Activated naive CD4-positive, alpha-beta T cell treated with anti-CD3 and anti-CD28 coated beads for 36 hours (primary cell): ENCODE measurements at regions of chr12 and their contacts with region 1.

Region 1: DNA sequence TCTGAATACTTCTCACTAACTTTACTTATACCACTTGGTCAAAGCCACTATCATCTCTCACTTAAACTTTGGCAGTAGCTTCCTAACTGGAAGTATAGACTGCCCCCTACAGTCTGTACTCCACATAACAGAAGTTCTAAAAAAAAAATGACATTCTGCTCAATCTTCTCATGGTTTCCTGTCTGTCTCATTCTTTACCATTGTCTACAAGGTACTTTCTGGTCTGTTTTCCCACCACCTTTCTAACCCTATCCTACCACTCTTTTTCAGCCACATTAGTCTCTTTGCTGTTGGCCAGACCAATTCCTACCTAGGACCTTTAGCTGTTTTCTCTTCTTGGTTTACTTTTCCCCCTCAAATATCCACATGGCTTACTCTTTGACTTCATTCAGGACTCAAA is 14.7 kb downstream of the CPSF6 start:
- DNase-seq: no peak
- H3K4me3 Mint-ChIP-seq: no peak overlapping the region
- H3K27ac Mint-ChIP-seq: peak overlapping the region; percentile 71
- H3K4me1 Mint-ChIP-seq: peaks cover 39% of the 10 kb centered on the region
- H3K27me3 Mint-ChIP-seq: no peaks in the 10 kb centered on the region

Region 2: DNA sequence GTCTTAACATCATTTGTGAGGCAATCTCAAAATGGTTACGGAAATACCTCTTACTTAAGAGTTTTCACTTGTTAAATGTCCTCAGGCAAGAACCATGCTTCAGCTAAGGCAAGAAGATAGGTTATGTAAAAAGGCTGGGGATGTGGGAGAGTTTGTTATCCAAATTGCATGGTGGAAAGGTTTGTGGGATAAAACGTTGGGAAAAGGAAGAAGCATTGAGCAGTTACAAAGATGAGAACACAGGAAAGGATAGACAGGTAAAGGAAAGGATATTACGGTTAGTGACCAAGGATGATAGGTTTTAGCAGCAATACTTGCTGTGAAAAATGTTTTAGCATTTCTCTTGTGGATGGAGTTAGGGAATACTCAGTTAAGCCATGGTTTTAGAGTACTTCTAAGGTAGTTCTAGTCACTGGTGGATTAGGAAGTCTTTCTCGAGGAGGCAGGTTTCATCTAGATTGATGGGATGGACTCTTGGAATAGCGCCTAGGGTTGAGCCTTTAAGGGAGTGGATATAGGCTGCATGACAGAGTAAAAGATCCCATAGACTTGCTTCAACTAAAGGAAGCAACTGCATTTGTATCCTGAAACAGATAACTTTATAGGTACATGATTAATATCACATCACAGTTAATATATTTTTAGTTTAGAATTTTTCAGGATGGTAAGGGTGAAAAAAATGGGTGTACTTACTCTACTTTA is 415.7 kb before region 1 on chr12:
- CTCF ChIA-PET with region 1: no interaction called
- intact Hi-C with region 1: no loop called
- DNase-seq: no peak
- H3K4me3 Mint-ChIP-seq: no peak overlapping the region
- H3K27ac Mint-ChIP-seq: peak overlapping the region; percentile 22
- H3K4me1 Mint-ChIP-seq: peaks cover 14% of the 10 kb centered on the region
- H3K27me3 Mint-ChIP-seq: no peaks in the 10 kb centered on the region

Region 3: DNA sequence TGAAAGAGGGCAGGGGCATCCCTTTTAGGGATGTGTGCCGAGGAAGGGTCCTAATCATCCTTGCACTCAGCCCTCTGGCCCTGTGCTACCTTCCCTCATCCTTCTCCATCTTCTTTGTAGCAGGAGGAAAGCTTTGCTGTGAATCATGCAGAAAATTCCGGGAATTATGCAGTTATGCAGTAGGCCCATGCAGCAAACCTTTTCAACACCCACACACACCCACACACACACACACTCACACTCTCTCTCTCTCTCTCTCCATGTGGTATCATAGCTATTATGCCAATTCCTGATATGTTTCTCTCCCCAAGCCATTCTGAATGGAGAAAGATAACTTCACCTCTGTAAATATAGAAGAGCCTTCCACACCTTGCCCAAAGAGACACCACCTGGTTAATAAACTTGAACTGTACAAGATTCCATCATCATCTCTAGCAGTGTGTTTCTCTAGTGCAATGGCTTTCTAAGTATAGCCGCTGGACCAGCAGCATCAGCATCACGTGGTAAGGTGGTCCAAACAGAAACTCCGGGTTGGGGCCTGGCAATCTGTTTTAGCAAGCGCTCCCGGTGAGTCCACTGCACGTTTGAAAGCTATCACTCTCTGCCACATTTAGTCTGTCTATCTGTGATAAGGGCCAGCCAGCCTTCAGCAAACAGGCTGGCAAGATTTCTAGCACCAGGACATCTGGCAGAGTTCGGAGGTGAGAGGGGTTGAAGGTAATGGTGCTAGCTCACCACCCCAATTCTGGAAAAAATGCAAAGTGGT is 388.5 kb before region 1 on chr12:
- CTCF ChIA-PET with region 1: no interaction called
- intact Hi-C with region 1: loop called (anchors 2 kb)
- DNase-seq: no peak
- H3K4me3 Mint-ChIP-seq: no peak overlapping the region
- H3K27ac Mint-ChIP-seq: no peak overlapping the region
- H3K4me1 Mint-ChIP-seq: peaks cover 6% of the 10 kb centered on the region
- H3K27me3 Mint-ChIP-seq: no peaks in the 10 kb centered on the region

Region 4: DNA sequence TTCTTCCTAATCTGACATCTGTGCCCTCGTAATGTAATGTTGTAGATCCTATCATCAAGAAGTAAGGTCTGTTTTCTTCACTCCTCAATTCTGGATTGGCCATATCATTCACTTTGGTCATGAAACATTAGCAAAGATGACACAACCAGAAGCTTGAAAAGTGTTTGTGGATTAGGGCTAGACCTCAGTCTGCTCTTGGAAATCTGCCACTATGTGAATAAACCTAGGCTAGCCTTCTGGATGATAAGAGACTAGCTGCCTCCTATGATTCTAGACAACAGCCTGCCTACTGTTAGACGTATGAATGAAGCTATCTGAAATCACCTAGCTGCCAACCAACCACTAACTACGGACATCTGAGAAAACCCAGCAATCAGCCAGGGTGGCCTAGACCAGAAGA is 55.4 kb after region 1 on chr12:
- CTCF ChIA-PET with region 1: no interaction called
- intact Hi-C with region 1: no loop called
- DNase-seq: no peak
- H3K4me3 Mint-ChIP-seq: no peak overlapping the region
- H3K27ac Mint-ChIP-seq: no peak overlapping the region
- H3K4me1 Mint-ChIP-seq: no peaks in the 10 kb centered on the region
- H3K27me3 Mint-ChIP-seq: no peaks in the 10 kb centered on the region

Region 5: DNA sequence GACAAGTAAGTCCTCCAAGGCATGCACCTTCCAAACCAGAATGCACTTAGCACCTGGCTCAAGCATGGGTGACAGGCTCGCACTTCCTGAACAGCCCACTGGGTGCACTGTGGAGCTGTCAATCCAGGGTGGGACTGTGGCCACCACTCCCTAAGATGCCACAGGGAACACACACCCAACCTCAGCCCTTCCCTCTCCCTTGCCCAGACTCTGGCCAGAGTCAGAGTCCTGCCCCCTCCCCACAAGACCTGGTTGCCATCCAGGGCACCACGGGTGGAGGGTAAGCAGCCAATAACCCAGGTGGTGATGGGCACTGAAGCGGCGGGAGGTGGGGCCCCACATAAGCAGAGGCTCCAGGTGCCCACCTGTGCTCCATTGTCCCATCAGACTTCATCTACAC is 731.6 kb after region 1 on chr12:
- CTCF ChIA-PET with region 1: no interaction called
- intact Hi-C with region 1: no loop called
- DNase-seq: peak; percentile 31
- H3K4me3 Mint-ChIP-seq: no peak overlapping the region
- H3K27ac Mint-ChIP-seq: no peak overlapping the region
- H3K4me1 Mint-ChIP-seq: no peaks in the 10 kb centered on the region
- H3K27me3 Mint-ChIP-seq: peaks cover 3% of the 10 kb centered on the region